CD4-positive, alpha-beta T cell (primary cell): ENCODE measurements at regions of chr3 and their contacts with region 1.

Region 1: GRCh38 chr3:68256635-68257223 is 602.3 kb upstream of the SUCLG2 start:
- DNase-seq: peak in 10 of 14 experiments; percentile 3 to 41 (median 15)
- ATAC-seq: no peak
- H3K4me3 ChIP-seq: no peak overlapping the region
- H3K4me3 Mint-ChIP-seq: no peak overlapping the region
- H3K27ac ChIP-seq: no peak overlapping the region
- H3K27ac Mint-ChIP-seq: no peak overlapping the region
- H3K4me1 ChIP-seq: no peaks in the 10 kb centered on the region
- H3K4me1 Mint-ChIP-seq: peaks cover 6% of the 10 kb centered on the region
- H3K27me3 ChIP-seq: no peaks in the 10 kb centered on the region
- H3K27me3 Mint-ChIP-seq: no peaks in the 10 kb centered on the region
- CTCF ChIP-seq: peak; percentile 57

Region 2: DNA sequence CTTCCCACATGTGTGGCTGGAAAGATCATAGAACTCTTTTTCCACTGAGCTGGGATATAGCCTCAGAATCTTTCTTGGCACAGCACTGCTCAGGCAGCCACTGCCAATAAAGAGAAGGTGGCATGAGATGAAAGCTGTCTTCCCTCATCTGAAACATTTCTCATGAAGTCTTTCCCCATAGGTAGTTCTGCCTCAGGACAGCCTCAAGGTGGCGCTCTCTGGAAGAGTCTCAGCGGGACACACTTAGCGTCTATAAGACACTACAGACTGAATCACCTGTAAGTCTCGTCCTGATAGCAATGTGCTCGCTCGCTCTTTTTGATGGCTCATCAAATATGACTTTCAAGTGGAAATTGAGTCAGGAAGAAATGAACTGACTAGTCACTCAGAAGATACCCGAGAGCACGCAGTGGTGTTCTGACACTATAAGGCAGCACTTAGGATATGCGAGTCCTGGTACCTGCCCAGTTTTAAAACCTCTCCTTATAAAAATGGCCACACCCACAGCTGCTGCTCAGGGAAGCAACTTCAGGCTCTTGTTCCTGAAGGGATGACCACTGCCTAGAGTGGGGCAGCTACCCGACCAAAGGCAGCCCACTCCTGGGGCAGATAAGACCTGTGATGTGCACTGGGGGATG is 871.9 kb before region 1 on chr3:
- CTCF ChIA-PET with region 1: no interaction called
- POLR2A ChIA-PET with region 1: no interaction called
- intact Hi-C with region 1: loop called (anchors 2 to 5 kb)
- DNase-seq: peak in 12 of 14 experiments; percentile 11 to 57 (median 34)
- ATAC-seq: no peak
- H3K4me3 ChIP-seq: no peak overlapping the region
- H3K4me3 Mint-ChIP-seq: no peak overlapping the region
- H3K27ac ChIP-seq: no peak overlapping the region
- H3K27ac Mint-ChIP-seq: peak overlapping the region; percentile 6
- H3K4me1 ChIP-seq: no peaks in the 10 kb centered on the region
- H3K4me1 Mint-ChIP-seq: no peaks in the 10 kb centered on the region
- H3K27me3 ChIP-seq: no peaks in the 10 kb centered on the region
- H3K27me3 Mint-ChIP-seq: no peaks in the 10 kb centered on the region
- CTCF ChIP-seq: peak; percentile 37

Region 3: GRCh38 chr3:67819447-67819846 is 437.3 kb before region 1 on chr3:
- CTCF ChIA-PET with region 1: no interaction called
- POLR2A ChIA-PET with region 1: no interaction called
- intact Hi-C with region 1: loop called in 1 of 2 experiments (anchors 2 kb)
- DNase-seq: peak in 5 of 14 experiments; percentile 3 to 38 (median 27)
- ATAC-seq: no peak
- H3K4me3 ChIP-seq: no peak overlapping the region
- H3K4me3 Mint-ChIP-seq: no peak overlapping the region
- H3K27ac ChIP-seq: no peak overlapping the region
- H3K27ac Mint-ChIP-seq: no peak overlapping the region
- H3K4me1 ChIP-seq: no peaks in the 10 kb centered on the region
- H3K4me1 Mint-ChIP-seq: no peaks in the 10 kb centered on the region
- H3K27me3 ChIP-seq: no peaks in the 10 kb centered on the region
- H3K27me3 Mint-ChIP-seq: no peaks in the 10 kb centered on the region
- CTCF ChIP-seq: peak; percentile 30

Region 4: DNA sequence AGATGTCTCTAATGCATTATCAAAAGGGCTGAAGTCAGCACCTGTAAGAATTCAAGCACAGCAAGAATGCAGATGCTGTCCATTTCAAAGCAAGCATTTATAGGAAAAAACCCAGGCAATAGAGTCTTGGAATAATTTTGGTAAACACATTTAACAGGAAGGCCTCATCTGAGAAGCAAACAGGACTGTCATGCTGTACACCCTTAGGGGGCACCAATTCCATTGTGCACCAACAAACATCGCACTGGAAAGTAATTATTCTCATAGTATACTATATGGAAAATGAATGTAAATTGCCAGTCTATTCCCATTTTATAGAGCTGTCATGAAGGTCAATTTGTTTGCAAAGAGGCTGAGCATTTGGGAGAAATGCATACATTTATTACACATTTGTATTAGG is 355.0 kb before region 1 on chr3:
- CTCF ChIA-PET with region 1: no interaction called
- POLR2A ChIA-PET with region 1: no interaction called
- intact Hi-C with region 1: loop called (anchors 1 to 2 kb)
- DNase-seq: peak in 4 of 14 experiments; percentile 8 to 34 (median 32)
- ATAC-seq: no peak
- H3K4me3 ChIP-seq: no peak overlapping the region
- H3K4me3 Mint-ChIP-seq: no peak overlapping the region
- H3K27ac ChIP-seq: no peak overlapping the region
- H3K27ac Mint-ChIP-seq: no peak overlapping the region
- H3K4me1 ChIP-seq: no peaks in the 10 kb centered on the region
- H3K4me1 Mint-ChIP-seq: peaks cover 13% of the 10 kb centered on the region
- H3K27me3 ChIP-seq: no peaks in the 10 kb centered on the region
- H3K27me3 Mint-ChIP-seq: no peaks in the 10 kb centered on the region
- CTCF ChIP-seq: peak; percentile 64

Region 5: GRCh38 chr3:68706096-68706495 is 449.4 kb after region 1 on chr3:
- CTCF ChIA-PET with region 1: no interaction called
- POLR2A ChIA-PET with region 1: no interaction called
- intact Hi-C with region 1: no loop called
- DNase-seq: no peak
- ATAC-seq: no peak
- H3K4me3 ChIP-seq: no peak overlapping the region
- H3K4me3 Mint-ChIP-seq: no peak overlapping the region
- H3K27ac ChIP-seq: no peak overlapping the region
- H3K27ac Mint-ChIP-seq: no peak overlapping the region
- H3K4me1 ChIP-seq: no peaks in the 10 kb centered on the region
- H3K4me1 Mint-ChIP-seq: no peaks in the 10 kb centered on the region
- H3K27me3 ChIP-seq: no peaks in the 10 kb centered on the region
- H3K27me3 Mint-ChIP-seq: peaks cover 30% of the 10 kb centered on the region
- CTCF ChIP-seq: no peak